Left cardiac atrium (tissue), 4 donors: ENCODE measurements at regions of chr16 and their contacts with region 1.

Region 1: GRCh38 chr16:89860747-89861304 is 12.6 kb upstream of the TCF25 start:
- DNase-seq: peak; percentile 66
- ATAC-seq: peak; percentile 80 to 82

Region 2: GRCh38 chr16:89700100-89700648 is 160.7 kb before region 1 on chr16:
- intact Hi-C with region 1: loop called (anchors 5 kb)
- DNase-seq: peak; percentile 99
- ATAC-seq: peak; percentile 70 to 74

Region 3: DNA sequence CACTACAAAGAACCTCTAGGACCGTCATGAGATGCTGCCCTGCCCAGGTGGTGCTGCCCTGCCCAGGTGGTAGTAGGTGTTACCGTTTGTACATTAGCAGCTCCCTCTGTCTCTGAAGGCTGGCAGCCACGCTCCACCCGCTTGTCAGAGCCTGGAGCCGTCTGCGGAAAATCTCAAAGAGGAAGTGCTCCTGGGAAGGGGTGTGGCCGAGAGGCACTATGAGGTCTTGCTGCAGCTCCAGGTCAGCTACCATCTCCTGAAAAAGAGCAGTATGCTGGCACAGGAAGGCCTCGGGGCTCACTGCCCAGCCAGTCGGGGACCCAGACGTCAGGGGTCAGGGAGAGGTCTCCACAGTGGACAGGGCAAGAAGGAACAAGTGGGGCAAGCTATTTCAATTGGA is 111.2 kb before region 1 on chr16:
- intact Hi-C with region 1: loop called (anchors 2 to 5 kb)
- DNase-seq: peak; percentile 52
- ATAC-seq: peak in 1 of 2 donors; percentile 63

Region 4: DNA sequence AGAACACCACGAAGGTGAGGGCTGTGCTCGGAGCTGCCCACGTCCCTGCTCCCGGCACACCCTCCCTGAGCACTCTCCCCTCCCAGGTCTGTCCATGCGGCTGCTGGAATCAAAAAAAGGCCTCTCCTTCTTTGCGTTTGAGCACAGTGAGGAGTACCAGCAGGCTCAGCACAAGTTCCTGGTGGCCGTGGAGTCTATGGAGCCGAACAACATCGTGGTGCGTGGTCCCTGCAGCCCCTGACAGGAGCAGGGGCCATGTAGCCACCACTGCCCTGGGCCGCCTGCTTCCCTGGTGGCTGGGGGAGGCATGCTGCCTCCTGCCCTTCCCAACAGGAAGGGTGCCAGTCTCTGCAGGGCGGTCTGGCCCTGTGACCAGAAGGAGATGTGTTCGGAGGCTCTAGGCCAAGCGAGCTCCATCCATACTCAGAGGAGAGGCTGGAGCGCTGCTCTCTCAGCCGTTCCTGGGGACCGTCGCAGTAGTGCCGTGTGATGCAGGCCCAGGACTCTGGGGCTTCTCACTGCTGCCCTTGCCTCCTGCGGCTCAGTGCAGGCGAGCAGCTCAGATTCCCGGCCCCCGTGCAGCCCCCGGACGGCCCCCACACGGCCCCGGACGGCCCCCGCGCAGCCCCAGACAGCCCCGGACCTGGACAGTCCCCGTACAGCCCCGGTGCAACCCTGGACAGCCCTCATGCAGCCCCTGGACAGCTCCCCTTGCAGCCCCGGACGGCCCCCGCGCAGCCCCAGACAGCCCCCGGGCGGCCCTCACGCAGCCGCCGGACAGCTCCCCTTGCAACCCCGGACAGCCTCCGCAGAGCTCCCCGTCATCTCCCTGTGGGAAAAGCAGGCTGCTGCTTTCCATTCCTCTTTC is 33.0 kb after region 1 on chr16:
- intact Hi-C with region 1: no loop called
- DNase-seq: no peak
- ATAC-seq: peak in 1 of 2 donors; percentile 6